ENCODE measurements at regions of chr3 and their contacts with region 1.

Region 1: GRCh38 chr3:100963041-100963440 is 30.2 kb downstream of the ABI3BP start:
- DNase-seq: no peak
- ATAC-seq: no peak
- H3K4me3 ChIP-seq: no peak overlapping the region
- H3K4me3 Mint-ChIP-seq: no peak overlapping the region
- H3K27ac ChIP-seq: no peak overlapping the region
- H3K27ac Mint-ChIP-seq: no peak overlapping the region
- H3K4me1 ChIP-seq: no peaks in the 10 kb centered on the region
- H3K4me1 Mint-ChIP-seq: no peaks in the 10 kb centered on the region
- H3K27me3 ChIP-seq: no peaks in the 10 kb centered on the region
- H3K27me3 Mint-ChIP-seq: peaks cover 0 to 2% of the 10 kb centered on the region in 2 donors

Region 2: DNA sequence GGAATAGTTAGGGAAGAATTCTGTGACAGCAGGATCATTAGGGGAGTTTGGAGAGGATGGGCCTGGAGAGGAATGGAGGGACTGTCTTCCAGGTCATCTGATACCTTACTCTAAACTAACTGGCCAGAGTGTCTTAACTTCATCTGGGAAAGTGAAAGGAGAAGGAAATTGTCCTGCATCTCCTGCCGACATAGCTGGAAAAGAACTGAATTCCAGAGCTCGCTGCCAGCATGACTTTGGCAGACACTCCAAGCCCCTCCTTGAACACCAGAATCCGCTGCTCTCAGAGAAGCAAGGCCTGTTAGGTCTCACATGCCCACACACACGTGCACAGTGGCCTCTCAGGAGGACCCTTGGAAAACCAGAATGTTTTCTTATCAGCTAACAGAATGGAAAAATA is 19.7 kb after region 1 on chr3:
- CTCF ChIA-PET with region 1: no interaction called
- POLR2A ChIA-PET with region 1: interaction called in 1 of 2 experiments, 16 read pairs
- DNase-seq: no peak
- ATAC-seq: no peak
- H3K4me3 ChIP-seq: no peak overlapping the region
- H3K4me3 Mint-ChIP-seq: no peak overlapping the region
- H3K27ac ChIP-seq: no peak overlapping the region
- H3K27ac Mint-ChIP-seq: no peak overlapping the region
- H3K4me1 ChIP-seq: no peaks in the 10 kb centered on the region
- H3K4me1 Mint-ChIP-seq: no peaks in the 10 kb centered on the region
- H3K27me3 ChIP-seq: no peaks in the 10 kb centered on the region
- H3K27me3 Mint-ChIP-seq: peaks cover 4 to 9% of the 10 kb centered on the region in 2 donors